ENCODE measurements at regions of chr2 and their contacts with region 1.

Region 1: GRCh38 chr2:44479122-44479887 is 117.6 kb downstream of the CAMKMT start:
- DNase-seq: peak; percentile 19
- H3K4me3 Mint-ChIP-seq: no peak overlapping the region
- H3K27ac Mint-ChIP-seq: no peak overlapping the region
- H3K4me1 Mint-ChIP-seq: peaks cover 2% of the 10 kb centered on the region
- H3K27me3 Mint-ChIP-seq: no peaks in the 10 kb centered on the region

Region 2: GRCh38 chr2:44044281-44044720 is 435.0 kb before region 1 on chr2:
- CTCF ChIA-PET with region 1: interaction called, 14 read pairs
- POLR2A ChIA-PET with region 1: interaction called, 3 read pairs
- intact Hi-C with region 1: loop called (anchors 1 kb)
- DNase-seq: peak; percentile 90
- H3K4me3 Mint-ChIP-seq: no peak overlapping the region
- H3K27ac Mint-ChIP-seq: no peak overlapping the region
- H3K4me1 Mint-ChIP-seq: no peaks in the 10 kb centered on the region
- H3K27me3 Mint-ChIP-seq: no peaks in the 10 kb centered on the region

Region 3: DNA sequence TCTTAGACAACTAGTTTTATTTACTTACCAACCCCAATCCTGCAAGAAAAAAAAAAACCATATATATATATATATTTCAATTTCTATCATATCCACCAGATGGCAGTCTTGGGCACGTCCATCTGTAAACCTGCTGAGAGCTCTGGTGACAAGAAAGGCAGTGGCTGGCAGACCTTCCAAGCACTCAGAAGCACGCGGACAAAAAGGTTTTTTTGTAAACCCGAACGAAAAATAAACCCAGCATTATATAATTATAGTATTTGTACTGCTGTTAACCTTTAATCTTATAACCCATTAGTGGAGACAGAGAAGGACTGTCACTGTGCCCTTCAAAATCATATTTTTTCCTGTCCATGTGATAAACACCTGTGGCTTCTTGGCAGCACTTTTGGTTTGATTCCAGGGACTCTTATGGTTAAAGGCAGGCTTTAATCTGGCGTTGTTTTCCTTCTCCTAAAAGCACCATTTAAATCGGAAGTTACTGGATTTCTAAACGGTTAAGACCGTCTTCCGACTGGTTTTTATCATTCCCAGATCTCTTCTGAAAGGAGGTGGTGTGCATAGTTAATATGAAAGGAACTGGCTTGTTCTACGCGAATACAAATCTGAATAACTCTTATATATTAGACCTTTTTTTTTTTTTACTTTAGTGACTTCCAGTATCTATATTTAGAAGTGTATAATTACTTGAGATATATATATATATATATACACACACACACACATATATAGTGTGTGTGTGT is 235.0 kb before region 1 on chr2:
- CTCF ChIA-PET with region 1: interaction called, 5 read pairs
- POLR2A ChIA-PET with region 1: no interaction called
- intact Hi-C with region 1: loop called (anchors 10 kb)
- DNase-seq: peak; percentile 64
- H3K4me3 Mint-ChIP-seq: peak overlapping the region; percentile 66
- H3K27ac Mint-ChIP-seq: no peak overlapping the region
- H3K4me1 Mint-ChIP-seq: peaks cover 12% of the 10 kb centered on the region
- H3K27me3 Mint-ChIP-seq: no peaks in the 10 kb centered on the region

Region 4: GRCh38 chr2:44490726-44491125 is 11.4 kb after region 1 on chr2:
- CTCF ChIA-PET with region 1: interaction called, 20 read pairs
- POLR2A ChIA-PET with region 1: no interaction called
- intact Hi-C with region 1: no loop called
- DNase-seq: no peak
- H3K4me3 Mint-ChIP-seq: no peak overlapping the region
- H3K27ac Mint-ChIP-seq: no peak overlapping the region
- H3K4me1 Mint-ChIP-seq: no peaks in the 10 kb centered on the region
- H3K27me3 Mint-ChIP-seq: no peaks in the 10 kb centered on the region

Region 5: GRCh38 chr2:44623622-44624351 is 144.5 kb after region 1 on chr2:
- CTCF ChIA-PET with region 1: no interaction called
- POLR2A ChIA-PET with region 1: no interaction called
- intact Hi-C with region 1: no loop called
- DNase-seq: no peak
- H3K4me3 Mint-ChIP-seq: no peak overlapping the region
- H3K27ac Mint-ChIP-seq: no peak overlapping the region
- H3K4me1 Mint-ChIP-seq: no peaks in the 10 kb centered on the region
- H3K27me3 Mint-ChIP-seq: no peaks in the 10 kb centered on the region

Region 6: DNA sequence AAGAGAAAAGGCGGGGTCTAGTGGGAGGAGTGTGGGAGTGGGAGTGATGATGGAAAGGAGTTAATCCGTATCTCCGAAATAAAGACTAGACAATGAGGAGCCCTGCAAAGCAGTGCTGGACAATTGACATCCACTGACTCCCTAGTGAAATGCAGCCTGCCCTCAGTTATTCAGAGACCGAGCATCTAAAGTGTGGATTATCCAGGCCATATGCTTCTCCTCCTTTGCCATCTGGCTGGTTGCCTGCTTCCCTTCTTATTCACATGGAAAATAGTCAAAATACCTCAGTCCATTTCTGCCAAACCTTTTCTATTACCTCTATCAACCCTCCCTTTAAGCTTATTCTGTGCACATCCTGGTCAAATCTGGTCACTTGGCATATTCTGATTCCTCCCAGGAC is 173.4 kb after region 1 on chr2:
- CTCF ChIA-PET with region 1: no interaction called
- POLR2A ChIA-PET with region 1: no interaction called
- intact Hi-C with region 1: no loop called
- DNase-seq: no peak
- H3K4me3 Mint-ChIP-seq: no peak overlapping the region
- H3K27ac Mint-ChIP-seq: no peak overlapping the region
- H3K4me1 Mint-ChIP-seq: no peaks in the 10 kb centered on the region
- H3K27me3 Mint-ChIP-seq: no peaks in the 10 kb centered on the region

Region 7: DNA sequence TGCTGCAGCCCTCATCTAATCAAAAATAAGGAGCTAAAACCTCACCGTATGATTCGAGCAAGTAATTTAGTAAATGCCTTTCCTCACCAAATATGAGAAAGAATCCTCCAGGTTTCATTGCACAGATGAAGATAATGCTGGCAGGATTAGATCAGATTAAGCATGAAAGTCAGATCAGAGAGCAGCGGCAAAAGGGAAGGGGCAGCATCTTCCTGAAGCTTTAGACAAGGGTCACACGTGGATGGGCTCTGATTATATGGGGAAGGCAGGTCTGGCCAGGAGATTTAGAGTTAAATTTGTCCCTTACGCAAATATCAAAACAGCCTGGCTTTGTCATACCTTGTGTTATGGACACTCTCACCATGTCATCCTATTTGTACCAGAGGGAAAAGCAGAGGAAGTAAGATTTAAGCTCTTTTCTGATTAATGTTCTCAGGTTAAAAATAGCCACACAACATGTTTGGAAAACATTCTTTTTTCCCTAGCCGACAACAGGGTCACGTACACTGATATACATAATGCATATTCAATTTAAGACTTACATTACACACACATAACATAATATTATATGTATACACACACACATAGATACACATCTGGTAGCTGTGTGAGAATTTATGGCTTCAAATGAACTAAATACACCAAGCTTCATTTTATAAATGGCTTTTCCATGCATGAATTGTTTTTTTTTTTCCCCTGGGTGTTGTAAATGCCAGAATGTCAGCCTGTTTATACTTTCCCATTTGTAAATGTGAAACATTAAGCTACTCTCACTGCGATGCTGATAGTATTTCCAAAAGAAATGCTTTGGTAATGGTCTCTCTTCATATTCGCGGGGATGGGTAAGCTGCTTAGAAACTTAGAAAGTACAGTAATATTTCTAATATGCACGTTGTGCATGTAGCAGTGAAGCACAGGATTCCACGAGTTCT is 265.9 kb after region 1 on chr2:
- CTCF ChIA-PET with region 1: interaction called, 10 read pairs
- POLR2A ChIA-PET with region 1: no interaction called
- intact Hi-C with region 1: no loop called
- DNase-seq: no peak
- H3K4me3 Mint-ChIP-seq: no peak overlapping the region
- H3K27ac Mint-ChIP-seq: no peak overlapping the region
- H3K4me1 Mint-ChIP-seq: no peaks in the 10 kb centered on the region
- H3K27me3 Mint-ChIP-seq: no peaks in the 10 kb centered on the region

Region 8: GRCh38 chr2:44928483-44929158 is 449.3 kb after region 1 on chr2:
- CTCF ChIA-PET with region 1: interaction called, 16 read pairs
- POLR2A ChIA-PET with region 1: no interaction called
- intact Hi-C with region 1: no loop called
- DNase-seq: peak; percentile 11
- H3K4me3 Mint-ChIP-seq: no peak overlapping the region
- H3K27ac Mint-ChIP-seq: no peak overlapping the region
- H3K4me1 Mint-ChIP-seq: peaks cover 17% of the 10 kb centered on the region
- H3K27me3 Mint-ChIP-seq: peaks cover 72% of the 10 kb centered on the region

Region 9: DNA sequence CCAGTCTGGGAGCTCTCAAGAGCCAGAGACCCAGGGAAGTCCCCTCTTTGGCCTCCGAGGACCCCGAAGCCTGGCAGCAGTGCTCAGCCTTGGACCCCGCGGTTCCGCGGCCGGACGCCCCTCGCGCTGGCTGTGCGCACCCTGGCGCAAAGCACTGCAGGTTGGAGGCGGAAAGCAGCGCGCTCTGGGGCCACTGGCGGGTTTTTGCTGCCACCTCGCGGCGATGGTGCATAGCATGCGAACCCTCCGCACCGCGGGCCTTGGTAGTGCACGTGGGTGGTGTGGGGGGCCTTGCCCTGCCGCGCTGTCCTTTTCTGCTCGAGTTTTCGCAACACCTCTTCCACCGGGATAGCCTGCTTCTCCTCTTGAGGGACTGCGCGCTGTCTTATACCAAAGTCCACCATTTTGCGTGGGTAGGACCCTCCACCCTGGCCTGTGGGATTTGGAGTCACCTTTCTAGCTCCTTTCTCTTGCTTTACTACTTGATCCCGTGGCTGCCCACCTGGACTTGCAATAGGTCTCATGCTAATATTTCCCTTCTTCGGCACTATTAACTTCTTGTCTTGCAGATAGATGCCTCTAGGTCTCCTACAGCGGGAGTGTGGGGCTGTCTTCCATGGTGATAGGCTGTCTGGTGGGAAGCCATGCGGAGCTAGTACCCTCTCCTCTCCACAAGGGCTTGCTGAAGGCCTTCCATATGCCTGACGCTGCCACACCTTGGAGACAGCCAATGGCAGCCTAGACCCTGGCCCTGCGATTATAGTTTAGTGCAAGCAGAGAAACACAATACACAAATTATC is 476.5 kb after region 1 on chr2:
- CTCF ChIA-PET with region 1: interaction called, 126 read pairs
- POLR2A ChIA-PET with region 1: no interaction called
- intact Hi-C with region 1: loop called (anchors 1 kb)
- DNase-seq: peak; percentile 83
- H3K4me3 Mint-ChIP-seq: no peak overlapping the region
- H3K27ac Mint-ChIP-seq: no peak overlapping the region
- H3K4me1 Mint-ChIP-seq: peaks cover 9% of the 10 kb centered on the region
- H3K27me3 Mint-ChIP-seq: peaks cover 47% of the 10 kb centered on the region

Measured in activated CD4-positive, alpha-beta memory T cell treated with anti-CD3 and anti-CD28 coated beads for 36 hours (primary cell).